Dorsolateral prefrontal cortex (tissue), 120 donors: ENCODE measurements at regions of chr17 and their contacts with region 1.

Region 1: DNA sequence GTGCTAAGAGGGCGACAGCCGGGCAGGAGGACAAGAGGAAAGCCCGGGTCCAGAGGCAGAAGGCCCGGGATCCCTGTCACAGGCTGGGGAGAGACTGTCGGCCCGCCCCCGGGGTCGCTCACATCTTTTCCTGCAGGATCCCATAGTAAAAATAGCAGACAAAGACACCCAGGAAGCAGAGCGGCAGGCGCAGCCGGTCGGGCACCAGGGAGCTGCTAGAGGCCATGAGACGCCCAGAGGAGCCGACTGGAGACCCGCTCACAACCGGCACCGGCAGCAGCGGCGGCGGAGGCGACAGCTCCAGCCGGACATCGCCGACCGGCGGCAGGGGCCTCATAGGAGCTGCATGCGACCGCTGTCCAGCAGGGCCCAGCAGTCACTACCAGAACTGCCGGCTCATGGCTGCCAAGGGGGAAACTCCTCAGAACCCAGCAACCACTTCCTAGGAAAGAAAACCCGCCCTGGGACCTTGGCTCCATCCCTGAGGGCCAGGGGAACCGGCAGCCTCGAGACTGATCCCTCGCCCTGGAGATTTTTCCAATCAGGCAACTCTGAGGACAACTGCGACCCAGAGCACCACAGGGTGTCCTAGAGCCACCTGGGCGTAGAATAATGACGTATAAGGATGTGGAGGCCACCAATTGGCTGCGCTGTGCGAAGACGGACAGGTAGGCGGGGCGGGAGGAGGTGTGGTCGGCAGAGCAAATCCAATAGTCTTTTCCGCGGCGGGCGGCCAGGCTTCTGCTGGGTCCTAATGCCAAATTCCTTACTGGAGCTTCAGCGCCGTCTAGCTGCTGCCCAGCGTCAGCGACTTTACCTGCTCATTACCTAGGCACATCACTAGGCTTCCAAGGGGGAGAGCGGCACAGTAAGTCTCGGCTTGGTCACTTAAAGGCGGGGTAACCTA is at the start of gene SLC35B1:
- DNase-seq: peak; percentile 98 to 100 (median 100)
- H3K4me3 ChIP-seq: peak within 1 kb of the TSS; percentile 76 to 100 (median 97)
- H3K27ac ChIP-seq: peak within 1 kb of the TSS; percentile 87 to 100 (median 98)
- H3K27me3 ChIP-seq: no peaks in the 10 kb centered on the region
- CTCF ChIP-seq: peak; percentile 53 to 91 (median 81)
- total RNA-seq, gene SLC35B1: 30.7 to 59.0 (median 43.7) TPM

Region 2: GRCh38 chr17:49407981-49408501 is 299.8 kb before region 1 on chr17:
- intact Hi-C with region 1: loop called in 1 of 2 experiments (anchors 5 kb)
- DNase-seq: peak; percentile 55 to 79 (median 68)
- H3K4me3 ChIP-seq: no peak overlapping the region
- H3K27ac ChIP-seq: peak overlapping the region in 36 of 59 donors; percentile 0 to 94 (median 37)
- H3K27me3 ChIP-seq: no peaks in the 10 kb centered on the region
- CTCF ChIP-seq: peak; percentile 42 to 86 (median 72)

Region 3: DNA sequence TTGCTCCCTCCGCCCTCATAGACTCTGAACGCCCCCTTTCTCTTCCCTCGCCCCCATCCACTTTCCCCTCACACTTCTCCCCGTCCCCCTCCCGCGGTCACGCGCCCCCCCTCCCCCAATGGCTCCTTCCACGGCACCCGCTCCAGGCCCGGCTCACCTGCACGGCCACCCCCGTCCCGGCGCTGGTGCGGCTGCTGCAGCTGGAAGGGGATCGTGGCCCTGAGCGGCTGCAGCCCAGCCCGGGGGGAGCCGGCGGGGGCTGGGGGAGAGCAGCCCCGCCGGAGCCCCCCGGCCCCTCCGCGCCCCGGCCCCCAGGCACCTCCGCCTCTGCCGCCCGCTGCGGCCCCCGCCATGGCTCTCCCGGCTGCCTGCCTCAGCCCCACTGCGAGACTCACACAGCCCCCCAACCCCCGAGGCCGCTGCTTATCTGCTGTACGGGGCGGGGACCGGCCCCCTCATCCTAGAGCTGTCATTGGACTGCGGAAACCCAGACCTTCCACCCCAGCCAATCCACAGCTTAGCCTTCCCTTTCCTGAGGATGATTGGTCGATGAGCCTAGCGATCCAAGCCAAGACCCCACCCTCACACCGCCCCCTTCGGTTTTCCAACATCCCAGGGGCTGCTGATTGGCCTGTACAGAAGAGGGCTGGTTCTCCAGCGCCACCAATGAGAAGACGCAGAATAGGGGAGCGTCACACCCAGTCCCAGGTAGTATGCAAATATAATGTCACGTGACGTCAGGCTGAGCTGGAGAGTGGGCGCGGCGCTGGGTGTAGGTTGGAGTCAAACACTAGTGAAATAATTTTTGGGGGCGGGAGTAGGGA is 56.1 kb after region 1 on chr17 and contains the start of gene FAM117A:
- intact Hi-C with region 1: loop called (anchors 5 kb)
- DNase-seq: peak; percentile 84 to 99 (median 98)
- H3K4me3 ChIP-seq: peak within 1 kb of the TSS; percentile 43 to 83 (median 72)
- H3K27ac ChIP-seq: peak within 1 kb of the TSS in 20 of 59 donors; percentile 1 to 73 (median 34)
- H3K27me3 ChIP-seq: no peaks in the 10 kb centered on the region
- CTCF ChIP-seq: peak in 12 of 56 donors; percentile 1 to 28 (median 22)
- total RNA-seq, gene FAM117A: 3.7 to 12.6 (median 6.9) TPM

Region 4: GRCh38 chr17:49788478-49789242 is 80.8 kb after region 1 on chr17 and contains the start of gene KAT7:
- intact Hi-C with region 1: loop called (anchors 2 to 5 kb)
- DNase-seq: peak; percentile 96 to 100 (median 99)
- H3K4me3 ChIP-seq: peak within 1 kb of the TSS; percentile 68 to 100 (median 99)
- H3K27ac ChIP-seq: peak within 1 kb of the TSS; percentile 86 to 100 (median 99)
- H3K27me3 ChIP-seq: no peaks in the 10 kb centered on the region
- CTCF ChIP-seq: peak in 54 of 56 donors; percentile 21 to 73 (median 54)
- total RNA-seq, gene KAT7: 73.9 to 129 (median 102) TPM